Panc1 (cell line): ENCODE measurements at regions of chr1 and their contacts with region 1.

Region 1: GRCh38 chr1:45938041-45938440 is 134.6 kb downstream of the MAST2 start:
- DNase-seq: no peak
- ATAC-seq: no peak
- H3K4me3 ChIP-seq: no peak overlapping the region
- H3K27ac ChIP-seq: no peak overlapping the region
- H3K4me1 ChIP-seq: no peaks in the 10 kb centered on the region
- H3K27me3 ChIP-seq: no peaks in the 10 kb centered on the region
- CTCF ChIP-seq: no peak

Region 2: GRCh38 chr1:44929531-44929930 is 1008.5 kb before region 1 on chr1:
- CTCF ChIA-PET with region 1: no interaction called
- POLR2A ChIA-PET with region 1: no interaction called
- in situ Hi-C with region 1: no loop called
- intact Hi-C with region 1: no loop called
- DNase-seq: no peak
- ATAC-seq: no peak
- H3K4me3 ChIP-seq: no peak overlapping the region
- H3K27ac ChIP-seq: no peak overlapping the region
- H3K4me1 ChIP-seq: peaks cover 7% of the 10 kb centered on the region; the same call in 1 of the 2 replicates
- H3K27me3 ChIP-seq: no peaks in the 10 kb centered on the region
- CTCF ChIP-seq: no peak

Region 3: GRCh38 chr1:45282351-45282750 is 655.7 kb before region 1 on chr1:
- CTCF ChIA-PET with region 1: no interaction called
- POLR2A ChIA-PET with region 1: no interaction called
- in situ Hi-C with region 1: no loop called
- intact Hi-C with region 1: no loop called
- DNase-seq: no peak
- ATAC-seq: no peak
- H3K4me3 ChIP-seq: no peak overlapping the region
- H3K27ac ChIP-seq: no peak overlapping the region
- H3K4me1 ChIP-seq: no peaks in the 10 kb centered on the region
- H3K27me3 ChIP-seq: no peaks in the 10 kb centered on the region
- CTCF ChIP-seq: no peak

Region 4: GRCh38 chr1:45954401-45954847 is 16.4 kb after region 1 on chr1:
- CTCF ChIA-PET with region 1: interaction called, 15 read pairs
- POLR2A ChIA-PET with region 1: no interaction called
- in situ Hi-C with region 1: no loop called
- intact Hi-C with region 1: no loop called
- DNase-seq: no peak
- ATAC-seq: no peak
- H3K4me3 ChIP-seq: no peak overlapping the region
- H3K27ac ChIP-seq: peak overlapping the region; percentile 54
- H3K4me1 ChIP-seq: peaks cover 8% of the 10 kb centered on the region
- H3K27me3 ChIP-seq: no peaks in the 10 kb centered on the region
- CTCF ChIP-seq: no peak